Natural killer cell (primary cell): ENCODE measurements at regions of chr19 and their contacts with region 1.

Region 1: GRCh38 chr19:1131738-1132551 is 28.2 kb downstream of the GPX4 start:
- DNase-seq: peak; percentile 83 to 92
- ATAC-seq: peak; percentile 62 to 79 (median 69)
- H3K4me3 ChIP-seq: peak overlapping the region; percentile 91
- H3K4me3 Mint-ChIP-seq: peak overlapping the region; percentile 91
- H3K27ac ChIP-seq: peak overlapping the region; percentile 88
- H3K27ac Mint-ChIP-seq: peak overlapping the region; percentile 89 to 96
- H3K4me1 ChIP-seq: peaks cover 75% of the 10 kb centered on the region
- H3K4me1 Mint-ChIP-seq: peaks cover 8 to 45% of the 10 kb centered on the region in 2 donors
- H3K27me3 ChIP-seq: no peaks in the 10 kb centered on the region
- H3K27me3 Mint-ChIP-seq: no peaks in the 10 kb centered on the region
- CTCF ChIP-seq: no peak

Region 2: DNA sequence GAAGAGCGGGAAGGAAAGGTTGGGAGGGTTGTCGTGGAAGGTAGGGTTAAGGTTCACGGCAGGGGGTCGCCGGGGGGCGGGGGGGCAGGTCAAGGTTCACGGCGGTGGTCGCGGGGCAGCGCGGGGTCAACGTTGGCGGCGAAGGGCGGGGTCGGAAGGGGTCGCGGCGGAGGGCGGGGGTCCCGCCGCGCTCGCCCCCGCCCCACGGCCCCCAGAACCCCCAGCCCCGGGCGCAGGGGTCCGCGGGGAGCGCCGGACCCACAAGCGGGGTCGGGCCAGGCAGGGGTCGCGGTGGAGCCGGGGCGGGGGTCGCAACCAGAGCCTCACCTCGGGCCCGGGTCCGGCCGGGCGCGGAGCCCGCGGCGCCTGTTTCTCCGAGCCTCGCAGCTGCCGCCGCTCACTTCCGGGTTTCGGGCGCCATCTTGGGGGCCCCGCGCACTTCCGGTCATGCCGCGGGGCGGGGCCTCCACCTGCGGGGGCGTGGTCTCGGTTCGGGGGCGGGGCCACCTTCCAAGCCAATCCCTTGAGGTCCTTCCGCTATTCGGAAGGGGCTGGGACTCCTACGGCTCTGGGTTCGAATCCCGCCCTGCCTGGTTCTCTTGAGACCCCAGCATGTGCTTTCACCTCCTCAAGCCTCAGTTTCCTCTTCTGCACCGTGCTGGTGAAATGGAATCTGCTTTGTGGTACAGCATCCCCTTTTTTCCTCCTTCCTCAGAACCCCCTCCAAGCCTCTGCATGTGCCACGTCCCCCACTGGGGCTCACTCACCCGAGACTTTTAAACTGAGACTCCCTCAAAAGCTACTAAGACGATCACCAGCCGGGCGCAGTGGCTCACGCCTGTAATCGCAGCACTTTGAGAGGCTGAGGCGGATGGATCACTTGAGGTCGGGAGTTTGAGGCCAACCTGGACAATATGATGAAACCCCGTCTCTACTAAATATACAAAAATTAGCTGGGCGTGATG is 42.2 kb after region 1 on chr19 and contains the start of gene SBNO2:
- intact Hi-C with region 1: loop called (anchors 5 kb)
- DNase-seq: peak; percentile 90 to 97
- ATAC-seq: peak; percentile 95 to 96 (median 95)
- H3K4me3 ChIP-seq: peak within 1 kb of the TSS; percentile 69
- H3K4me3 Mint-ChIP-seq: peak within 1 kb of the TSS; percentile 92
- H3K27ac ChIP-seq: peak within 1 kb of the TSS; percentile 75
- H3K27ac Mint-ChIP-seq: peak within 1 kb of the TSS; percentile 67 to 93
- H3K4me1 ChIP-seq: peaks cover 55% of the 10 kb centered on the region
- H3K4me1 Mint-ChIP-seq: peaks cover 17 to 54% of the 10 kb centered on the region in 2 donors
- H3K27me3 ChIP-seq: no peaks in the 10 kb centered on the region
- H3K27me3 Mint-ChIP-seq: no peaks in the 10 kb centered on the region
- CTCF ChIP-seq: no peak
- total RNA-seq, gene SBNO2: 92.0 to 106 (median 94.3) TPM

Region 3: GRCh38 chr19:1205114-1206062 is 73.4 kb after region 1 on chr19 and contains the start of gene STK11:
- intact Hi-C with region 1: loop called (anchors 1 kb)
- DNase-seq: peak; percentile 98 to 100
- ATAC-seq: peak; percentile 92 to 98 (median 94)
- H3K4me3 ChIP-seq: peak within 1 kb of the TSS; percentile 55
- H3K4me3 Mint-ChIP-seq: peak within 1 kb of the TSS; percentile 96
- H3K27ac ChIP-seq: peak within 1 kb of the TSS; percentile 77
- H3K27ac Mint-ChIP-seq: peak within 1 kb of the TSS; percentile 88 to 90
- H3K4me1 ChIP-seq: peaks cover 47% of the 10 kb centered on the region
- H3K4me1 Mint-ChIP-seq: peaks cover 14 to 34% of the 10 kb centered on the region in 2 donors
- H3K27me3 ChIP-seq: no peaks in the 10 kb centered on the region
- H3K27me3 Mint-ChIP-seq: no peaks in the 10 kb centered on the region
- CTCF ChIP-seq: no peak
- total RNA-seq, gene STK11: 51.5 to 61.1 (median 54.0) TPM